ENCODE measurements at regions of chr3 and their contacts with region 1.

Region 1: DNA sequence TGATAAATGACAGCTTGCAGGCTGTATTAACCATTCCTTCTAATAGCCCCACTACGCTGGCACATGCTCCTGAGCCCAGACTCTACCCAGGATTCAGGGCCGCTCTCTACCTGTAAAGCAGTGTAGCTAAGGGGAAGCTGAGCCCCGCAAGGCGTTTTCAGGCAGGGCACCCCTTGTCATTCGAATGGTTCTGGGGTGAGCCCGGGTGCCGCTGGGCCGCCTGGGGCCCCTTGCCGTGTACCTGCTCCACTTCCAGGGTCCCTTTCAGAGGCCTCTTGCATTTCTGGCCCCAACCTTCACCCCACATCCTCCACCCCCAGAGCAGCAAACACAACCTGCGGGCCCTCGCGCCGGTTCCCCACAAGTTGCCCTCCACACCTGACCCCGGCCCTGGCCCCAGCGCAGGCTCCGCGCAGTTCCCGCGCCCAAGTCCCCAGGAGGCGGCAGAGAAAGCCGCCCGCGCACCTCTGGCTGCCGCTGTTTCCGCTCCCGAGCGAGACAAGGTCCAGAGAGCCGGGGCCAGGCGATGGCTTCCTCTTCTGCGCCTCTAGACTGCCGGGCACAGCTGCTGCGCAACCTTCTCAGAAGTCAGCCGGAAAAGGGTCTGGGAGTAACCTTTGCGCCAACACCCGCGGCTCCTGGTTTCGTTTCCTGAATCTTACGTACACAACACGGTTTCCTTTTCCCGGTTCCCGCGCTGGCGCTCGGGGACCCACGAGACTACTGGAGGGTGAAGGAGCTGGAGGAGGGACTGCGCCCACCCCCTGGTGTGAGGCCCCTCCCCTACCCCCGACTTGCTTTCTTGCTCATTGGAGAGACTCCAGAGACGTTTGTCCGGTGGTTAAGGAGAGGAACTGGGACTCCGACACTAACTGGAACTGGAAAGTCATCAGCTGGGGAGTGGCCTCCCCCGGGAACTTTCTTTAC is at the start of gene PLSCR1:
- DNase-seq: peak; percentile 89
- H3K4me3 Mint-ChIP-seq: peak within 1 kb of the TSS; percentile 89
- H3K27ac Mint-ChIP-seq: peak within 1 kb of the TSS; percentile 87
- H3K4me1 Mint-ChIP-seq: peaks cover 53% of the 10 kb centered on the region
- H3K27me3 Mint-ChIP-seq: no peaks in the 10 kb centered on the region
- total RNA-seq, gene PLSCR1: 60.1 to 64.3 TPM

Region 2: DNA sequence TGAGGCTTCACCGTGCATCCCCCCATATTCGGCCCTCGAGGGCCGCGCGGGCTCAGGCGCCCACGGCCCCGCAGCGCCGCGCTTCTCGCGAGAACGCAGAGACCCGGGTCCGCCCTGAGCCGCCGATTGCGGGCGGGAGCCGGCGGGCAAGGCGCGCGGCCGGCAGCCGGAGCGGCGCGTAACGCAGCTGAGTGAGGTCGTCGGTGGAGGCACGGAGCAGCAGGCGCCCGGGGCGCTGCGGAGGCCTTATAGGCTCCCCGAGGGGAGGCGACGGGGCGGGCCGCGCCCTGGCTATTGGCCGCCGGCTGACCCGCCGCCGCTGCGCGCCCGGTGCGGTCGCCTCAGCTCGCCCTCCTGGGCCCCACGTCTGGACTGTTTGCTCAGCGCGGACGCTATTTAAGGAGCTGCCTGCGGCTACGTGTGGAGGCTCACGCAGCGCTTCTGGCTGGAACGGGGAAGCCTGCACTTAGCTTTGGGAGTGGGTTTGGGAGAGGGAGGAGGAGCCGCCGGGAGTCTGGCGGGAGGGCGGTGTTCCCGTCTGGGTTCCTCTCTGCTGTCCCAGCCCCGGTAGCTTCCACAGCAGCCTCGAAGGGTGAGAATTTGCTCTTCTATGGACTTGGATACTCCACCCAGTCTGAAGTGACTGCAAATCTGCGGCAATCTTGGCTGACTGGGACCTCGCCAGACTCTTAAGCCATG is 383.2 kb before region 1 on chr3 and contains the start of gene PLOD2:
- CTCF ChIA-PET with region 1: no interaction called
- intact Hi-C with region 1: loop called (anchors 5 kb)
- DNase-seq: peak; percentile 13
- H3K4me3 Mint-ChIP-seq: peak within 1 kb of the TSS; percentile 66
- H3K27ac Mint-ChIP-seq: no peak within 1 kb of the TSS
- H3K4me1 Mint-ChIP-seq: peaks cover 13% of the 10 kb centered on the region
- H3K27me3 Mint-ChIP-seq: peaks cover 59% of the 10 kb centered on the region
- total RNA-seq, gene PLOD2: 0.22 to 0.45 TPM

Region 3: DNA sequence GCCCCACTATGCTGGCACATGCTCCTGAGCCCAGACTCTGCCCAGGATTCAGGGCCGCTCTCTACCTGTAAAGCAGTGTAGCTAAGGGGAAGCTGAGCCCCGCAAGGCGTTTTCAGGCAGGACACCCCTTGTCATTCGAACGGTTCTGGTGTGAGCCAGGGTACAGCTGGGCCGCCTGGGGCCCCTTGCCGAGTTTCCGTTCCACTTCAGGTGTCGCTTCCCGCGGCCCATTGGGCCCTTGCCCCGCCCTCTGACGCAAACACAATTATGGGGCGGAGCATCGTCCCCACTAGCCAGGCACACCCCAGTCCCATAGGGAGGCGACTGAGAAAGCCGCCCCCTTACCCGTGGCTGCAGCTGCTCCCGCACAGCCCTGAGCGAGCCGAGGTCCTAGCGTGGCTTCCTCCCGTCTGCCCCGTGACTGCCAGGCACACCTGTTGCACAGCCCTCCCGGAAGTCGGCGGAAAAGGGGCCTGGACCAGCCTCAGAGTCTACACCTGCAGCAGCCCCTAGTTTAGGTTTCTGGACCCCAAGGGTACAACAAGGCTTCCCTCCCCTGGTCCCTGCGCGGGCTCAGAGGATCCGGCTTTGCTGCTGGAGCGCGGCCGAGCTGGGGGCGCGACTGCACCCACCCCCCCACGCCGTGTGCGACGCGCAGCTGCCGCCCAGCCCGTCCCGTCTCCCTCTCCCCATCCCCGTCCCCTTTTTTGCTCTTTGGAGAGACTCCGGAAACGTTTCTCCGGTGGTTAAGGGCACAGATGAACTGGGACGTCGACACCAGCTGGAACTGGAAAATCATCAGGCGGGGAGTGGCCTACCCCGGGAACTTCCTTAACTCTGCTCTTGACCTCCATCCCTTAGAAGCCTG is 74.9 kb before region 1 on chr3 and contains the start of gene PLSCR2:
- CTCF ChIA-PET with region 1: no interaction called
- intact Hi-C with region 1: loop called (anchors 1 kb)
- DNase-seq: peak; percentile 81
- H3K4me3 Mint-ChIP-seq: peak within 1 kb of the TSS; percentile 73
- H3K27ac Mint-ChIP-seq: peak within 1 kb of the TSS; percentile 78
- H3K4me1 Mint-ChIP-seq: peaks cover 2% of the 10 kb centered on the region
- H3K27me3 Mint-ChIP-seq: no peaks in the 10 kb centered on the region
- total RNA-seq, gene PLSCR2: not detected

Region 4: GRCh38 chr3:146501752-146502151 is 42.5 kb before region 1 on chr3:
- CTCF ChIA-PET with region 1: no interaction called
- intact Hi-C with region 1: loop called (anchors 2 kb)
- DNase-seq: no peak
- H3K4me3 Mint-ChIP-seq: no peak overlapping the region
- H3K27ac Mint-ChIP-seq: no peak overlapping the region
- H3K4me1 Mint-ChIP-seq: peaks cover 19% of the 10 kb centered on the region
- H3K27me3 Mint-ChIP-seq: no peaks in the 10 kb centered on the region

Region 5: DNA sequence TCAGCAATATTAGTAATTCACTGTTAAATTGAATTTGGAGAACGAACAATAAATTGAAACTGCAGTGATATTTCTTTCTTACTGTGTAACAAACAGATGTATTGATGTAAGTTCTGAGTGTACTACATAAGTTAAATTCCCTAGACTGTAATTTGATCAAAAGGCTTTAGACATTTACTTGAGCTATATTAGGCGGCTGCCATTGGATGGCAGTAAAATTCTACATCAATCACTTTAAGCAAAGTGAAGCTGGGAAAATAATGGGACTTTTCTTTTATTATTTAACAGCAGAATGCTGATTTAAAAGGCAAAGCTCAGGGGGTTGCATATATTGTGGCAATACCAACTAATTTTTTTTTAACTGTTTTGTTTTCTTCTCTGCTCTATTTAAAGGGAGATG is 273.4 kb after region 1 on chr3:
- CTCF ChIA-PET with region 1: no interaction called
- intact Hi-C with region 1: no loop called
- DNase-seq: no peak
- H3K4me3 Mint-ChIP-seq: no peak overlapping the region
- H3K27ac Mint-ChIP-seq: no peak overlapping the region
- H3K4me1 Mint-ChIP-seq: no peaks in the 10 kb centered on the region
- H3K27me3 Mint-ChIP-seq: no peaks in the 10 kb centered on the region

Region 6: DNA sequence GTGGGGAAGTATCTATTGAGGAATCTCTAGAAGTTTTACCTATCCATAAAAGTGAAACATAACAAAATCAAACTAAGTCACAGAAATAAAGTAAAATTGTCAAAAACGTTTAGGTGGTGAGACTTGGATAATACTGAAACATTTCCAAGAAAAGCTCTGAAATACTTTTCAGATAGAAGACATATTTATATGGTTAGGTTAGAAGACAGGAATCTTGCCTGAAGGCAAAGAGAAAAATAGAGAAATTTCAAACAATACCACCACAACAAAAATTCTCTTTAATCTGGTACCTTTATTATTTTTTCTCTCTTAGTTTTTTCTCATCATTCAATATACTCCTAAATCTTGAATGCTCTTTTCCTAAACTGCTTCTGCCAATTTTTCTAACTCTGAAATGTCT is 283.6 kb after region 1 on chr3:
- CTCF ChIA-PET with region 1: no interaction called
- intact Hi-C with region 1: no loop called
- DNase-seq: no peak
- H3K4me3 Mint-ChIP-seq: no peak overlapping the region
- H3K27ac Mint-ChIP-seq: no peak overlapping the region
- H3K4me1 Mint-ChIP-seq: no peaks in the 10 kb centered on the region
- H3K27me3 Mint-ChIP-seq: no peaks in the 10 kb centered on the region